Tibial artery (tissue), 4 donors: ENCODE measurements at regions of chr20 and their contacts with region 1.

Region 1: GRCh38 chr20:21125849-21126580 is at the start of gene KIZ:
- DNase-seq: peak; percentile 94 to 97
- H3K4me3 ChIP-seq: peak within 1 kb of the TSS; percentile 83 to 89
- H3K27ac ChIP-seq: peak within 1 kb of the TSS; percentile 86 to 89
- H3K4me1 ChIP-seq: peaks cover 0 to 18% (median 7%) of the 10 kb centered on the region in 4 donors
- H3K27me3 ChIP-seq: no peaks in the 10 kb centered on the region
- CTCF ChIP-seq: peak; percentile 50 to 52

Region 2: DNA sequence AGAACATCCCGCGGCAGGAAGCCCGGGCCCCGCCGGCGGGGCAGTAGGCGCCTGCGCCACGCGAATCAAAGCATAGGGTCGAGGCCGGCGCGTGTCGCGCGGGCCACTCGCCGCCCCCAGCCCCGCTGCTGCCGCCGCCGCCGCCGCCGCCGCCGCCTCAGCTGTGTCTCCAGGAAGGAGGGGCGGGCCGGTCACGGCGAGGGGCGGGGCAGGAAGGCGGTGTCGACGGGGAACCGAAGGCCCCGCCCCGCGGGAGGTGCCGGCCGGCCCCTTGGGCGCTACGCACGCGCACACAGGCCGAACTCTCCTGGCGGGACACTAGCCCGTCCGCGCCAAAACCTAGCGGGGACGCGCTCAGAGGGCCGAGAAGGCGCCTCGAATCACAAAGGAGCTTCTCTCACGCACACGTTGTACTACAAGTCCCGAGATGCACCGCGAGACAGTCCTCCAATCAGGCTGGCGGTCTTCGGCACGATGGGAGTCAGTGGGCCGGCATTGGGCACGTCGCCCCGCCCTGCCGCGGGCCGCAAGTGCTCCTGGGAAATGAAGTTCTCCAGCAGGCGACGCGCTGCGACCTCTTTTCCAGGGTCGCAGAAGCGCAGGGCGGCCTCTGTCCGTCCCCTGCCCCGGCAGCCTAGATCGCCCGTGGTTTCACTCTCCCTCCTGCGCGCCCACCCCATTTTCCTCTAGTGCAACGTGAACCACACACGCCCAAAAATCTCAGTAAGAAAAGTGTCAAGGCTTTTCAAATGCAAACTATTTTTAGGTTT is 413.4 kb before region 1 on chr20 and contains the start of gene RALGAPA2:
- intact Hi-C with region 1: loop called (anchors 10 kb)
- DNase-seq: peak; percentile 99
- H3K4me3 ChIP-seq: peak within 1 kb of the TSS; percentile 74 to 93
- H3K27ac ChIP-seq: peak within 1 kb of the TSS; percentile 75 to 84
- H3K4me1 ChIP-seq: peaks cover 0 to 19% (median 11%) of the 10 kb centered on the region in 4 donors
- H3K27me3 ChIP-seq: no peaks in the 10 kb centered on the region
- CTCF ChIP-seq: no peak

Region 3: GRCh38 chr20:21182832-21183563 is 57.0 kb after region 1 on chr20:
- intact Hi-C with region 1: loop called (anchors 5 kb)
- DNase-seq: peak in 1 of 2 donors; percentile 69
- H3K4me3 ChIP-seq: no peak overlapping the region
- H3K27ac ChIP-seq: peak overlapping the region; percentile 72 to 78
- H3K4me1 ChIP-seq: peaks cover 0 to 41% (median 16%) of the 10 kb centered on the region in 4 donors
- H3K27me3 ChIP-seq: no peaks in the 10 kb centered on the region
- CTCF ChIP-seq: no peak

Region 4: DNA sequence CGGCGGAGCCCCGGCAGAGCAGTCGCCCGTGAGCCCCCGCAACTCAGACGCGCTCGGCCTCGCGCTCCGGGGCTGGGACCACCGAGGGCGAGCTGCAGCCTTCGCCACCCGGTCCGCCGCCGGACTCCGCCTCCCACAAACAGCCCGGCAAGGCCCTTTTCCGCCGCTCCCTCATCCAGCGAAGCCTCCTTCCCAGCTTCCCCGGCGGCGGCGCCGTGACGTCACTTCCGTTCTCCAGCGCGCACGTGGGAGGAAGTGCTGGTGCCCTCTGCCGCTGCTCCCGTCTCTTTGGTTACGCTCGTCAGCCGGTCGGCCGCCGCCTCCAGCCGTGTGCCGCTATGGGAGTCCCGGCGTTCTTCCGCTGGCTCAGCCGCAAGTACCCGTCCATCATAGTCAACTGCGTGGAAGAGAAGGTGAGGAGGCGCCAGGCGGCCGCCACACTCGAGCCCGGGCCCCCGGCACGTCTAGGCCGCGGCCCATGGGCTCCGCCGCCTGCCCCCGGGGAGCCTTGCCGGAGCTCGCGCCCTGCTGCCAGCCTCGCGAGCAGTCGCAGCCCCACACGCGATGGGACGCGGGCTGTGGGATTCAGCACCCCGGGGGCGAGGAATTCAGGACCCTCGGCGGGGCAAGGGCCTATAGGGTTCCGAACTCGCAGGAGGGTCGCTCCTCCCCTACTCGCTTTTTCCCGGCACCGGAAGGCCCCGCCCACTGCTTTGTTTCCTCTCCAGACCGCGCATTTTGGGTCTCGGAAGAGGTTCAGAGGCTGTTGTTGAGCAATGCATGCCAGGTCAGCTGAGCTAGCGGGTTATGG is 177.3 kb after region 1 on chr20 and contains the start of gene XRN2:
- intact Hi-C with region 1: loop called (anchors 5 kb)
- DNase-seq: peak; percentile 94 to 97
- H3K4me3 ChIP-seq: peak within 1 kb of the TSS; percentile 88 to 98
- H3K27ac ChIP-seq: peak within 1 kb of the TSS; percentile 95 to 99
- H3K4me1 ChIP-seq: peaks cover 0 to 19% (median 5%) of the 10 kb centered on the region in 4 donors
- H3K27me3 ChIP-seq: no peaks in the 10 kb centered on the region
- CTCF ChIP-seq: no peak